ENCODE measurements at regions of chr2 and their contacts with region 1.

Region 1: DNA sequence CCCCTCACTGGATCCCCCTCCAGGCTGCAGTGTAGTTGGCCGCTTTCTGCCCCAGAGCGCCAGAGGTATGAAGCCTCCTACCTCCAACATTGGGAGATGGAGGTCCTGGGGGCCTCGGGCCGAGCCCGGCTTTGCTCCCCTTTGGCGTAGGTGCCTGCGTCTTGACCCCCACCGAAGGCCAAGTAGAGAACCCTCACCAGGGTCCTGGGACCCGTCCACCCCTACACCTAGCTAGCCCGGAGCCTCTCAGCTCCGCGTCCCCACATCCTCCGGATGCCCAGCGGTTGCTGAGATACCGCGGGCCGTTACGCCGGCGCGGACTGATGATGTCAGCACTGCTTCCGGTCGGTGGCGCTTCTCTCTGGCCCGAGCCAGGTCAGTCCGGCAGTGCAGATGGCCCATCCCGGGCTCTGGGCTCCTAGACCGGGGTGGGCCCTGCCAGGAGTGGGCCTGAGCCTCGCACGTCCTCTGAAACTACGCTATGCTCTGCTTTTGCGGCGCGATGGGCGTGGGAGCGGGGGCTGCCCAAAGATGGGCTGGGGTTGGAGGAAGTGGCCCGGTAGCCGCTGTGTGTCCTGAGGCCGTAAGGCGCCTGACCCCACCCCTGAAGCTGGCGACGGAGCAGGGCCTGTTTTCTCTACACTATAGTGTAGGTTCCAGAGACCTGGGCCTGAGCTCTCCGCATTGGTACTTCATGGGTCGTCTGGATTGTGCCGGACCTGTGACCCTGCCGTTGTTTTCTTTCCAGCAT is at the starts of genes GLB1L and STK16:
- DNase-seq: peak; percentile 94
- H3K4me3 ChIP-seq: peak within 1 kb of the TSS; percentile 73
- H3K4me3 Mint-ChIP-seq: peak within 1 kb of the TSS; percentile 82
- H3K27ac Mint-ChIP-seq: peak within 1 kb of the TSS; percentile 90
- H3K4me1 ChIP-seq: peaks cover 33% of the 10 kb centered on the region
- H3K4me1 Mint-ChIP-seq: peaks cover 23% of the 10 kb centered on the region
- H3K27me3 ChIP-seq: no peaks in the 10 kb centered on the region
- H3K27me3 Mint-ChIP-seq: no peaks in the 10 kb centered on the region
- CTCF ChIP-seq: no peak
- total RNA-seq, gene GLB1L: 3.3 and 4.3 TPM in 2 replicates
- total RNA-seq, gene STK16: 26.1 and 26.6 TPM in 2 replicates

Region 2: DNA sequence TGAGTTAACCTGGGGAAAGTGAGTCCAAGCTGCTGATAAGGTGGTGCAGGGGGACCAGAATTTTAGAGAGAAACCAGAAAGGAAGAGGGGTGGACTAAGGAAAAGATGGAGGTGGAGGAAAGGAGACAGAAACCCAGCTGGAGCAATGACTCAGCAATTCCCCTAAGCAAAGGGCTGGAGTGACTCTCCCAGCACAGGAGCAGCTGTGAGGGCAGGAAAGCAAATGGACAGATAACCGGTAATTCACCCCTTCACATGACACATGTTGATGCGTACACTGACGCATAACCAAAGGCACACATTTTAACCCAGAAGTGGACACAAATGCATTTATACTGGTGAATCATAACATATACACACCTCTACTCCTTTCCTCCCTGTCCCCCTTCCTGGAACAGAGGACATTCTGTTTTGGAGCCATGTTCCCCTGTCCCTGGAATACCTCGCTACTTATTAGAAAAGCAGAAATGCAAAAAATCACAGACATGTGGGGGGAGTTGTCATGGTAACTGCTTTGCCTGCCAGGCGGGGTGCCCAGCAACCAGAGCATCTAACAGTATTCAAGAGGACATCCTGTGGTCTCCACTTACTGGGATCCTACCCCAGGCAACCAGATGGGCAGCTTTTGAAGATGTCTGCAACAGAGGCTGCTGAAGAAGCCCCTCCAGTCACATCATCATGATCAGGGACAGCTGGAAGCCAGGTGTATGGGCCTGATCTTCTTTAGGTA is 281.1 kb before region 1 on chr2:
- CTCF ChIA-PET with region 1: no interaction called
- POLR2A ChIA-PET with region 1: no interaction called
- intact Hi-C with region 1: no loop called
- DNase-seq: no peak
- H3K4me3 ChIP-seq: no peak overlapping the region
- H3K4me3 Mint-ChIP-seq: no peak overlapping the region
- H3K27ac Mint-ChIP-seq: peak overlapping the region; percentile 6
- H3K4me1 ChIP-seq: peaks cover 34% of the 10 kb centered on the region
- H3K4me1 Mint-ChIP-seq: peaks cover 16% of the 10 kb centered on the region
- H3K27me3 ChIP-seq: peaks cover 5% of the 10 kb centered on the region
- H3K27me3 Mint-ChIP-seq: peaks cover 21% of the 10 kb centered on the region
- CTCF ChIP-seq: no peak

Region 3: GRCh38 chr2:219229305-219230058 is 15.8 kb before region 1 on chr2 and contains the starts of genes ANKZF1 and ATG9A:
- CTCF ChIA-PET with region 1: no interaction called
- POLR2A ChIA-PET with region 1: interaction called, 11 read pairs
- intact Hi-C with region 1: loop called (anchors 1 kb)
- DNase-seq: peak; percentile 99
- H3K4me3 ChIP-seq: peak within 1 kb of the TSS; percentile 69
- H3K4me3 Mint-ChIP-seq: peak within 1 kb of the TSS; percentile 100
- H3K27ac Mint-ChIP-seq: peak within 1 kb of the TSS; percentile 100
- H3K4me1 ChIP-seq: 0 out of 2 replicates have a peak, but pooled peaks cover 4% of the 10 kb centered on the region
- H3K4me1 Mint-ChIP-seq: no peaks in the 10 kb centered on the region
- H3K27me3 ChIP-seq: no peaks in the 10 kb centered on the region
- H3K27me3 Mint-ChIP-seq: no peaks in the 10 kb centered on the region
- CTCF ChIP-seq: no peak
- total RNA-seq, gene ANKZF1: 50.7 and 51.5 TPM in 2 replicates
- total RNA-seq, gene ATG9A: 59.6 and 62.9 TPM in 2 replicates